ENCODE measurements at regions of chr22 and their contacts with region 1.

Region 1: GRCh38 chr22:45163451-45164269 is at the start of gene NUP50:
- DNase-seq: peak; percentile 96
- H3K4me3 Mint-ChIP-seq: peak within 1 kb of the TSS; percentile 91
- H3K27ac Mint-ChIP-seq: peak within 1 kb of the TSS; percentile 97
- H3K4me1 Mint-ChIP-seq: peaks cover 43% of the 10 kb centered on the region
- H3K27me3 Mint-ChIP-seq: no peaks in the 10 kb centered on the region
- CTCF ChIP-seq: no peak
- total RNA-seq, gene NUP50: 70.3 and 72.5 TPM in 2 replicates

Region 2: GRCh38 chr22:44382116-44383038 is 781.3 kb before region 1 on chr22:
- CTCF ChIA-PET with region 1: no interaction called
- POLR2A ChIA-PET with region 1: no interaction called
- intact Hi-C with region 1: no loop called
- DNase-seq: no peak
- H3K4me3 Mint-ChIP-seq: no peak overlapping the region
- H3K27ac Mint-ChIP-seq: no peak overlapping the region
- H3K4me1 Mint-ChIP-seq: no peaks in the 10 kb centered on the region
- H3K27me3 Mint-ChIP-seq: peaks cover 32% of the 10 kb centered on the region
- CTCF ChIP-seq: no peak

Region 3: GRCh38 chr22:44975427-44976262 is 188.0 kb before region 1 on chr22:
- CTCF ChIA-PET with region 1: no interaction called
- POLR2A ChIA-PET with region 1: interaction called, 3 read pairs
- intact Hi-C with region 1: loop called (anchors 10 kb)
- DNase-seq: peak; percentile 91
- H3K4me3 Mint-ChIP-seq: no peak overlapping the region
- H3K27ac Mint-ChIP-seq: no peak overlapping the region
- H3K4me1 Mint-ChIP-seq: no peaks in the 10 kb centered on the region
- H3K27me3 Mint-ChIP-seq: peaks cover 51% of the 10 kb centered on the region
- CTCF ChIP-seq: peak; percentile 89

Region 4: GRCh38 chr22:45101515-45102227 is 62.0 kb before region 1 on chr22:
- CTCF ChIA-PET with region 1: interaction called, 4 read pairs
- POLR2A ChIA-PET with region 1: interaction called, 8 read pairs
- intact Hi-C with region 1: loop called (anchors 2 kb)
- DNase-seq: peak; percentile 83
- H3K4me3 Mint-ChIP-seq: no peak overlapping the region
- H3K27ac Mint-ChIP-seq: no peak overlapping the region
- H3K4me1 Mint-ChIP-seq: peaks cover 10% of the 10 kb centered on the region
- H3K27me3 Mint-ChIP-seq: peaks cover 16% of the 10 kb centered on the region
- CTCF ChIP-seq: peak; percentile 51

Region 5: GRCh38 chr22:45246060-45246985 is 82.7 kb after region 1 on chr22:
- CTCF ChIA-PET with region 1: interaction called, 3 read pairs
- POLR2A ChIA-PET with region 1: interaction called, 20 read pairs
- intact Hi-C with region 1: loop called (anchors 2 kb)
- DNase-seq: peak; percentile 96
- H3K4me3 Mint-ChIP-seq: peak overlapping the region; percentile 40
- H3K27ac Mint-ChIP-seq: peak overlapping the region; percentile 95
- H3K4me1 Mint-ChIP-seq: peaks cover 13% of the 10 kb centered on the region
- H3K27me3 Mint-ChIP-seq: no peaks in the 10 kb centered on the region
- CTCF ChIP-seq: no peak

Region 6: DNA sequence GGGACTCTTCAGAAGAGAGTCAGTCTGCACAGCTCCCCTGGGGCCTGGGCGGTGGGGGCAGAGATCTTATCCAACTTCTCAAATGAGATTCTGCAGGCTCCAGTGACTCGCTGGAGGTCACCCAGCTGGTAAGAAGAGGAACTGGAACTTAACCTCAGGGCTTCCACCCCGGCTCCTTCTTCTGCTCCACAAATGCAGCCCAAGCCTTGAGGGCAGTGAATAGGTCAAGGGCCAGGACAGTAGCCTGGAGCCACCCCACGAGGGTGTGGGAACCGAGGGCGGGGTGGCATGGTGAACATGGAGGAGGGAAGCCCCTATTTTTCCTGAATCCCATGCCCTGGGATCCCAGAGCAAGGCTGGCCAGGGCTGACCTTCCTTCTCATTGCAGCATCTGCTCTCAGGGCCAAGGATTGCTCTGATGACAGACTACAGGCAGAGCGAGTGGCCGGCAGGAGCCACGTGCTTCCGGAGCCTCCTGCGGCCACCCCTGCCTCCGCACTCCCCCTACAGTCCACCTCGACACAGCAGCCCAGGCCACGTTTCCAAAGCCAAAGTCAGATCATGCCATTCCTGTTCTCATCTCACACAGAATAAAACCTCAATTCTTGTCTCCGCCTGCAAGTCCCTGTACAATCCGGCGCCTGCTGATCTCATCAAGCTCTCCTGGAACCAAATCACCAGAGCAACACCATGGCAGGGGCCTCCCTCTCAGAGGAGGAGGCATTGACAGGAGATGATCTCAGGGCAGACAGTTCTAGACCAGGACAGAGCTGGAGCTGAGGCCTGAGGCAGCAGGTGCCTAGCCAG is 100.0 kb after region 1 on chr22:
- CTCF ChIA-PET with region 1: no interaction called
- POLR2A ChIA-PET with region 1: interaction called, 3 read pairs
- intact Hi-C with region 1: loop called (anchors 5 kb)
- DNase-seq: peak; percentile 75
- H3K4me3 Mint-ChIP-seq: no peak overlapping the region
- H3K27ac Mint-ChIP-seq: no peak overlapping the region
- H3K4me1 Mint-ChIP-seq: peaks cover 8% of the 10 kb centered on the region
- H3K27me3 Mint-ChIP-seq: no peaks in the 10 kb centered on the region
- CTCF ChIP-seq: peak; percentile 63